Activated CD8-positive, alpha-beta memory T cell treated with anti-CD3 and anti-CD28 coated beads, Interleukin-2, amount 10 ng/mL, durations not matched to agents 7 days and 5 days (primary cell): ENCODE measurements at regions of chr1 and their contacts with region 1.

Region 1: GRCh38 chr1:32892368-32893197 is 6.3 kb downstream of the HPCA start:
- DNase-seq: peak; percentile 51
- ATAC-seq: peak; percentile 75
- H3K4me3 Mint-ChIP-seq: no peak overlapping the region
- H3K27ac Mint-ChIP-seq: no peak overlapping the region
- H3K4me1 Mint-ChIP-seq: no peaks in the 10 kb centered on the region
- H3K27me3 Mint-ChIP-seq: peaks cover 73% of the 10 kb centered on the region

Region 2: DNA sequence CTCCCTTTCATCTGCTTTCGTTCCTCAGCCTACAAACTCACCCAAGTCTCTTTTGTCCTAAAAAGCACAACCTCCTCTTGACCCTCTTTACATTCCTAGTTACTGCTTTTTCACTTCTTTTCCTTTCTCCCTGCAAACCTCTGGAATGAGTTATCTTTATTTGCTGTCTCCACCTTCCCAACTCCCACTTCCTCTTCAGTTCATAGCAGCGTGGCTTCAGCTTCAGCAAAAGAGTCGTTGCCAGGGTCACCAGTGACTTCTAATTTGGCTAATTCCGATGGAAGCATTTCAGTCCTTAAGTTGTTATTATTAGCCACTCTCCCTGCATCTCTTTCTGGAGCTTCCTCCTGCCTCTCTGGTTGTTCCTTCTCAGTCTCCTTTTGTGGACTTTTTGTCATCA is 14.9 kb after region 1 on chr1:
- CTCF ChIA-PET with region 1: interaction called, 12 read pairs
- DNase-seq: no peak
- ATAC-seq: no peak
- H3K4me3 Mint-ChIP-seq: no peak overlapping the region
- H3K27ac Mint-ChIP-seq: no peak overlapping the region
- H3K4me1 Mint-ChIP-seq: no peaks in the 10 kb centered on the region
- H3K27me3 Mint-ChIP-seq: peaks cover 34% of the 10 kb centered on the region

Region 3: GRCh38 chr1:32972814-32973428 is 80.3 kb after region 1 on chr1:
- CTCF ChIA-PET with region 1: no interaction called
- DNase-seq: no peak
- ATAC-seq: peak; percentile 45
- H3K4me3 Mint-ChIP-seq: peak overlapping the region; percentile 55
- H3K27ac Mint-ChIP-seq: no peak overlapping the region
- H3K4me1 Mint-ChIP-seq: peaks cover 27% of the 10 kb centered on the region
- H3K27me3 Mint-ChIP-seq: peaks cover 22% of the 10 kb centered on the region